ENCODE measurements at regions of chr7 and their contacts with region 1.

Region 1: DNA sequence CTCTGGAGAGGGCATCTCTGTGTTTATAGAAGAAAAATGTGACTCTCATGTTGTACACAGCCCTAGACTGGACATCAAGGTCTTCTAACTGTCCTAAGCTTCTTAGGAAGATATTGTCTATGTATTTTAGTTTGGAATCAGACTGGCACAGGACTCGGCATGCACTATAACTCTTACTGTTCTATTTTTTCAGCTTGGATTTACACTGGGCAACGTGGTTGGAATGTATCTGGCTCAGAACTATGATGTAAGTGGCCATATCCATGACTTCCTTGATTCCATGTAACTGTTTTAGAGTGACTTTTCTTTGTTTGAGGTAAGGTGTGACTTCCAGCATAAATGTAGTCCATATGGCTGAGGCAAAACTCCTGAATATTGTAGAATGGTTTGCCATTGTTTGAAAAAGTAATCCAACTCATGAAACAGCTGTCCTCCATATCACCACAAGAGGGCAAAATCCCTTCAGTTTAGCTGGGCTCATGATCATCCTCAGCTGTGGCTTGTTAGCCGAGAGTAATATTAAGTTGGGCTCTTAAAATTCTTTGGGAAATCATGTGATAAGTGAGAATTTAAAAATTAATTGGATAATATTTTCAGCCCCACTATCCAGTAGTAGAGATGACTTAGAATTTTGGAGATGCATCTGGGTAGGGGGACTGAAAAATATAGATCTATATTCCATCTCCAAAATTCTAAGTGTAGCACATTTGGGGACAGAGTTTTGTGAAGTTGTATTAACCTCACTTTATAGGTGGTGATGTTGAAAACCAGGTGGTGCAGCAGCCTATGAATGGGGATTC is 10.4 kb downstream of the STMP1 start:
- DNase-seq: peak; percentile 64 to 78 (median 69)
- ATAC-seq: peak; percentile 91
- H3K4me3 ChIP-seq: no peak overlapping the region
- H3K27ac ChIP-seq: no peak overlapping the region
- H3K4me1 ChIP-seq: peaks cover 0 to 3% of the 10 kb centered on the region in 2 experiments; a peak in 1 of 5 replicates
- H3K27me3 ChIP-seq: no peaks in the 10 kb centered on the region
- CTCF ChIP-seq: peak; percentile 82 to 92 (median 89)
- EP300 ChIP-seq: no peak; the same call in 1 of the 2 replicates
- POLR2A ChIP-seq: no peak
- RAD21 ChIP-seq: peak; percentile 79 to 80

Region 2: DNA sequence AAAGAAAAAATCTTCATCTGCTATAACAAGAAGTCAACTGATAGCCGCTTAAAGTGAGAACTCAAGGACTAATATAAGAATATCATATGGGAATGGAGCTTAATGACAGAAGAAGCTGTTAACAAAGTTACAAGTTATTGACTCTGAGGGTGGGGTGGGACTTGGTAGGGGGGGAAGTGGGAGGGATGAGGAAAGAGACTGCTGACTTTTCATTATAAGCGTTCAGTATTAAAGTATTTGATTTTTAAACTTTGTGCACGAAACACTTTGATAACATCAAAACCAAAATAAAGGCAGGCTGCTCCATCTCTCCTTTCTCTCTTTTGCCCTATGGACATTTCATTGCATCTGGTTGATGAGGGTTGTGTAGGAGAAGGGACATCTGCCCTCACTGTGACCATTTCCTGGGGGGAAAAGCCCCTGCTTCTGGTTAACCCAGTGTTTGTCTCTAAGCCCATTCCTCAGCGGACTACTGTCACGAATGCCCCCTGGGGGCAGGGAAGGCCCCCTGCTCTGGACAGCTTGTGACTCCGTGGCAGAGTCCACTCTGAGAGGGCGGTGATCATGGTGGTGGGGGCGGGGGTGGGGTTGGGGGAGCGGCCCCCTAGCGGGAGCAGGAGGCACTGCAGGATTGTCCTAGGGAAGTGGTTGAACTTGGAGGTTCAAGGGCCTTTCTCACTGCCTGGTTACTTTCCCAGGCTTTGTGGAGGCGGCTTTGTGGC is 37.8 kb after region 1 on chr7:
- CTCF ChIA-PET with region 1: no interaction called
- POLR2A ChIA-PET with region 1: interaction called, 3 read pairs
- in situ Hi-C with region 1: no loop called
- intact Hi-C with region 1: loop called (anchors 1 kb)
- DNase-seq: peak; percentile 78 to 93 (median 92)
- ATAC-seq: peak; percentile 88
- H3K4me3 ChIP-seq: peak overlapping the region; percentile 33
- H3K27ac ChIP-seq: no peak overlapping the region; the same call in 2 of the 3 replicates
- H3K4me1 ChIP-seq: peaks cover 2 to 14% of the 10 kb centered on the region in 2 experiments; a peak in 3 of 5 replicates
- H3K27me3 ChIP-seq: peaks cover 25 to 40% of the 10 kb centered on the region in 2 experiments; a peak in 4 of 5 replicates
- CTCF ChIP-seq: peak; percentile 63 to 72 (median 68)
- EP300 ChIP-seq: no peak
- POLR2A ChIP-seq: no peak
- RAD21 ChIP-seq: no peak

Region 3: DNA sequence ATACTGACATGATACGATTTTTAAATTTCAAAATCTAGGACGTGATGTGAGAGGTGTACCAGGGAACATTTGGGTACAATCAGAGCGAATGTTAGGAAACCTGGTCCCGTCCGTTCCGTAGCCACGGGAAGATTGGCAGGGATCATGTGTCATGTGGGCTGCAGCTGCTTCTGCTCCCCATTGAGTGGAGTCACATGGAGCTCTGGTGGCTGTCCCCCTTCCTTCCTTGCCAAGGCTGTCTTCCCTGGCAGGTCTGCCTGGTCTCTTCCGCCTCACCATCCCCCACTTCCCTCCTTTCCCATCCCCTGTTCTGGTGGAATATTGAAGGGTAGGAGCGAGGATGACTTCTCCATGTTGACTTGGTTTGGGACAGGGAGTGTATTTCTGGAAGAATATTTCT is 109.6 kb after region 1 on chr7:
- CTCF ChIA-PET with region 1: no interaction called
- POLR2A ChIA-PET with region 1: no interaction called
- in situ Hi-C with region 1: no loop called
- intact Hi-C with region 1: loop called (anchors 5 kb)
- DNase-seq: no peak
- ATAC-seq: no peak
- H3K4me3 ChIP-seq: no peak overlapping the region
- H3K27ac ChIP-seq: no peak overlapping the region
- H3K4me1 ChIP-seq: no peaks in the 10 kb centered on the region; a peak in 2 of 5 replicates
- H3K27me3 ChIP-seq: peaks cover 28 to 30% of the 10 kb centered on the region in 2 experiments
- CTCF ChIP-seq: no peak
- EP300 ChIP-seq: no peak
- POLR2A ChIP-seq: no peak
- RAD21 ChIP-seq: no peak